ENCODE measurements at regions of chr2 and their contacts with region 1.

Region 1: GRCh38 chr2:221444106-221444505 is 128.0 kb downstream of the EPHA4 start:
- DNase-seq: no peak
- ATAC-seq: peak; percentile 89 to 97 (median 94)
- H3K4me3 ChIP-seq: no peak overlapping the region
- H3K27ac ChIP-seq: peak overlapping the region; percentile 73
- H3K4me1 ChIP-seq: peaks cover 12% of the 10 kb centered on the region
- H3K27me3 ChIP-seq: no peaks in the 10 kb centered on the region
- CTCF ChIP-seq: no peak

Region 2: DNA sequence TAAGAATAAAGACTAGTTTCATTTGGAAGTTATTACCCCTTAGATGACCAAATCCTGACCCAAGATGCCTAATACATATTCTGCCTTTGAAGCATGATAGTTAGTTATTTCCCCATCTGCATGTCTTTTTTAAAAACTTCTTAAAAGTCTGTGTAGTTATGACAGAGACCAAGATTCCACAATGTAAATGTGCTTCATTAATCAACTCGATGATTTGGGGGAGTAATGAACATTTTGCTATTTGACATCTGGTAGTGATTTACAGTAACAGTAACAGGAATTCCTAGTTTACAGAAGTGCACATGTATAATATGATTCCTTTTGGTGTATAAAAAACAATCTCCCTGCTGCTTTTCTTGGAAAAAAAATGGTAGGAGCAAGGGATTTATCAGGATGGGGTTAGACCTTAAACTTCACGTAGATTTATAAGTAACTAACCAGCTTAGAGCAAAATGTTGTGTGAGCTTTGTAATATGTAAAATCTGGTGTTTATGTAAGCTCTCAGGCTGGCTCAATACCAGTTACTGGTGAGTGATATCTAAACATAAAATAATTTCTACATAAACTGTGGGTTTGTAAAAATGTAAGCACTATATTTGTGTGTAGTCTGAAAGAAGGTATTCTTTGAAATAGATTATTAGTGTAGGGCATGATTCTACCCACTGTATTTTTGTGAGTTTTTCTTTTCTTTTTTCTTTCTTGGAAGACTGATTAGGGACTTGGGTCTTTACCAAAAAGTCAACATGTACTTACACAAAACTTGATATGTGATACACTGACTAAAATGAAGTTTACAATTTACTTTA is 513.6 kb before region 1 on chr2:
- intact Hi-C with region 1: no loop called
- DNase-seq: no peak
- ATAC-seq: no peak
- H3K4me3 ChIP-seq: no peak overlapping the region
- H3K27ac ChIP-seq: no peak overlapping the region
- H3K4me1 ChIP-seq: no peaks in the 10 kb centered on the region
- H3K27me3 ChIP-seq: no peaks in the 10 kb centered on the region
- CTCF ChIP-seq: no peak

Region 3: DNA sequence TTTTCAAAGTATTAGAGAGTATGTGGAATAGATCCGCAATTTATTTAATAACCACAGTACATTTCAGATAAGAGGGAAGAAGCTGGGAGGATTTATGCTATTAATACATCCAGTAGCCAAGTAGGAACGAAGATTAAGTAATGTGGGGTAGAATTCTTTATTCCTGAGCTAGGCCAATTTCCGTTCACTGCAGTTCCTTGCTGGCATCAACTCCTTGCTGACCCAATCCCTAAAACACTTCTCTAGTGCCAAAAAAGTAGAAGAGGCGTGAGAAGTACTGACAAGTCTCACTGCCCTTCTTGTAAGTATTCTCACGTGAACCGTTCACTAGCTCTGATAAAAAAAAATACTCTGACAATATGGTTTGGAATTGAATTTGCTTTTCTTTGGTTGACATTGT is 83.4 kb before region 1 on chr2:
- intact Hi-C with region 1: no loop called
- DNase-seq: no peak
- ATAC-seq: no peak
- H3K4me3 ChIP-seq: no peak overlapping the region
- H3K27ac ChIP-seq: no peak overlapping the region
- H3K4me1 ChIP-seq: no peaks in the 10 kb centered on the region
- H3K27me3 ChIP-seq: no peaks in the 10 kb centered on the region
- CTCF ChIP-seq: no peak

Region 4: DNA sequence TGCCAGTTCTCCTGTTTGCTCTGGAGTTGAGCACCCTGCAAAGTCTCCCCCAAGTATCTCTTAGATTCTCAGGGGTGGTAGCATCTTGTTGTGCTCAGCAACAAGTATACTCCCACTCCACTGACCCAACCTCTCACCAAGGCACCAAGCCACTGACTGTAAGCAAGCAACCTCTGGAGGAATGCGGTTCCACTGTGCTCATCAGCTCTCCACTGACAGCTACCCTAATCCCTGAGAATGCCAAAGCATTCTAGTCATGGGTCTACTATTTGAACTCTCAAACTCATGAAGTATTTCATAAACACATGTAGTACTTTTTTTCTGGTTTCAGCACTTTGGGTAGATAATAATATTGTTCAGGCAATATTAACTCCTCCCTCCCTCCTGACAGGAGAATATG is 42.0 kb before region 1 on chr2:
- intact Hi-C with region 1: no loop called
- DNase-seq: no peak
- ATAC-seq: no peak
- H3K4me3 ChIP-seq: no peak overlapping the region
- H3K27ac ChIP-seq: no peak overlapping the region
- H3K4me1 ChIP-seq: no peaks in the 10 kb centered on the region
- H3K27me3 ChIP-seq: no peaks in the 10 kb centered on the region
- CTCF ChIP-seq: no peak

Region 5: DNA sequence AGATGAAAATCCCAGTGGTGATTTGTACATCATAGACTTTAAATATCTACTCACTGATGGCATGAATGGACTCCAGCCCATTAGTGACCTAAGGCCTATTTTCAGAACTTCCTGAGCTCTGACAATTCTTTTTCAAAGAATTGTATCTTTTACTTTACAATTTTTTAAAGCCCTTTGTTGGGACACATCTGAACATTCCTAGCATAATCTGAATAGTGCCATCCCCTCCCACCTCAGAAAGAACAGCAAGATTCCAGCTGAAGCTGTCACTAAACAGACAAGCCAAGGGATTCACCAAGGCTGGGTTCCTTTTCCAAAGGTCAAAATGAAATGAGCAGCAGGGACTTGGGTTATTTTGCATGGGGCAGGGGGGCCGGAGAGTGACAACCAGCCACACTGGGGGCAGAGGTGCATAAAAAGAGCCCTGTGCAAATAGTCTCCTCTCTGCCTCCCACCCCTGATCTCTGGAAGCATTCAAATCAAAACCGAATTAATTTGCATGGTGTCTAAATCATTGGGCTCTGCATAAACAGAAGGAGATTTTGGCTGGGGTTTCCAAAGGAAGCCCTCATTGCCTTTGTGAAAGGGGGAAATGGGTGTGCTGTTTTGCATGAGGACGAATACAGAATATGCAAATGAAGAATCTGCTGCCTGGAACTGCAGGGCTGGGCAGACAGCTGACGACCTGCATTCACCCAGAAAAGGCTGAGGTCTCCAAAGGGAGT is 110.8 kb after region 1 on chr2:
- intact Hi-C with region 1: loop called in 1 of 2 experiments (anchors 5 kb)
- DNase-seq: no peak
- ATAC-seq: peak; percentile 66 to 95 (median 84)
- H3K4me3 ChIP-seq: peak overlapping the region; percentile 45
- H3K27ac ChIP-seq: peak overlapping the region; percentile 82
- H3K4me1 ChIP-seq: peaks cover 23% of the 10 kb centered on the region
- H3K27me3 ChIP-seq: no peaks in the 10 kb centered on the region
- CTCF ChIP-seq: no peak

Region 6: DNA sequence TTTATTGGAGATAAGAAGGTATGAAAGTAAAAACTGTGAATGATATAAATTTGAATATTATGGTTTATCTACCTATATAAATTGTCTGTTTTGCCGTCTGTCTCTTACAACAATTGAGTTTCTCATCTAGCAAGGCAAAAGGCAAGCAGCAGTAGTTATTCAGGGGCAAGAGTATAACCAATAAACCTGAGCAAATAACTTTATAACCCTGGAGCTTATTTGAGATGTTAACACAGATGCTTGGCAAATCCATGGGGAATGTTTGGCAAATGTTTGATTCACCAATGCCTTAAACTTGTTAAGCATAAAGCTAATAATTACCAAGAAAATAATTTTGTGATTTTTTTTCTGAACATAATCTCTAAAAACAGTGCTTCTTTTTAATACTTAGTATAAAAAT is 137.9 kb after region 1 on chr2:
- intact Hi-C with region 1: no loop called
- DNase-seq: no peak
- ATAC-seq: no peak
- H3K4me3 ChIP-seq: no peak overlapping the region
- H3K27ac ChIP-seq: no peak overlapping the region
- H3K4me1 ChIP-seq: no peaks in the 10 kb centered on the region
- H3K27me3 ChIP-seq: peaks cover 0 to 9% (median 0%) of the 10 kb centered on the region in 3 donors
- CTCF ChIP-seq: no peak

Measured in psoas muscle (tissue), 8 donors.